Activated CD8-positive, alpha-beta T cell treated with anti-CD3 and anti-CD28 coated beads for 36 hours (primary cell): ENCODE measurements at regions of chr18 and their contacts with region 1.

Region 1: GRCh38 chr18:23967321-23968089 is 47.0 kb upstream of the TTC39C start:
- DNase-seq: peak; percentile 59
- ATAC-seq: peak; percentile 41
- H3K4me3 Mint-ChIP-seq: no peak overlapping the region
- H3K27ac Mint-ChIP-seq: peak overlapping the region; percentile 14
- H3K4me1 Mint-ChIP-seq: peaks cover 74% of the 10 kb centered on the region
- H3K27me3 Mint-ChIP-seq: no peaks in the 10 kb centered on the region
- CTCF ChIP-seq: no peak

Region 2: GRCh38 chr18:23573626-23574431 is 393.7 kb before region 1 on chr18:
- CTCF ChIA-PET with region 1: no interaction called
- POLR2A ChIA-PET with region 1: no interaction called
- intact Hi-C with region 1: no loop called
- DNase-seq: peak; percentile 63
- ATAC-seq: peak; percentile 83
- H3K4me3 Mint-ChIP-seq: no peak overlapping the region
- H3K27ac Mint-ChIP-seq: peak overlapping the region; percentile 69
- H3K4me1 Mint-ChIP-seq: peaks cover 50% of the 10 kb centered on the region
- H3K27me3 Mint-ChIP-seq: no peaks in the 10 kb centered on the region
- CTCF ChIP-seq: no peak

Region 3: DNA sequence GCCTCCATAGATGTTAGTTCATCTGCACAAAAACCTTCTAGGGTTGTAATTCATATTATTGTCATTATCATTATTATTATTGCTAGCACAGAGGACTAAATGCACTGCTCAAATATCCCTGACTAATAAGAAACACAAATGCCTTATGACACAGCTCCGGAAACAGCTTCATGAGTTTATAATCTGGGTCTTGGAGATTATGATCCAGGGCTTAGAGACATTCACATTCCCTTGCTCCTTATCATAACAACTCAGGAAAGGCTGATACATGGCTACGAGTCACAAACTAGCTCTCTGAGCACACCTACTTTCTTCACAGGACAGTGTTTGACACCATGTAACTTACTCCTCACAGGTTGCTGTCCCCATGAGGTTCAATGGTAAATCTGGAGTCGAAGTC is 55.1 kb before region 1 on chr18:
- CTCF ChIA-PET with region 1: no interaction called
- POLR2A ChIA-PET with region 1: no interaction called
- intact Hi-C with region 1: no loop called
- DNase-seq: no peak
- ATAC-seq: no peak
- H3K4me3 Mint-ChIP-seq: no peak overlapping the region
- H3K27ac Mint-ChIP-seq: no peak overlapping the region
- H3K4me1 Mint-ChIP-seq: no peaks in the 10 kb centered on the region
- H3K27me3 Mint-ChIP-seq: no peaks in the 10 kb centered on the region
- CTCF ChIP-seq: no peak

Region 4: GRCh38 chr18:23994361-23994902 is 26.9 kb after region 1 on chr18:
- CTCF ChIA-PET with region 1: interaction called, 12 read pairs
- POLR2A ChIA-PET with region 1: interaction called, 3 read pairs
- intact Hi-C with region 1: loop called (anchors 2 kb)
- DNase-seq: peak; percentile 53
- ATAC-seq: peak; percentile 41
- H3K4me3 Mint-ChIP-seq: peak overlapping the region; percentile 63
- H3K27ac Mint-ChIP-seq: peak overlapping the region; percentile 82
- H3K4me1 Mint-ChIP-seq: peaks cover 45% of the 10 kb centered on the region
- H3K27me3 Mint-ChIP-seq: no peaks in the 10 kb centered on the region
- CTCF ChIP-seq: no peak